ENCODE measurements at regions of chr4 and their contacts with region 1.

Region 1: GRCh38 chr4:85747882-85748491 is 273.0 kb downstream of the ARHGAP24 start:
- DNase-seq: no peak
- H3K4me3 ChIP-seq: no peak overlapping the region
- H3K27ac ChIP-seq: no peak overlapping the region
- H3K4me1 ChIP-seq: peaks cover 21% of the 10 kb centered on the region
- H3K27me3 ChIP-seq: no peaks in the 10 kb centered on the region
- CTCF ChIP-seq: peak; percentile 90

Region 2: GRCh38 chr4:85084380-85085094 is 663.5 kb before region 1 on chr4:
- intact Hi-C with region 1: loop called (anchors 10 kb)
- DNase-seq: no peak
- H3K4me3 ChIP-seq: no peak overlapping the region
- H3K27ac ChIP-seq: no peak overlapping the region
- H3K4me1 ChIP-seq: no peaks in the 10 kb centered on the region
- H3K27me3 ChIP-seq: no peaks in the 10 kb centered on the region
- CTCF ChIP-seq: peak; percentile 76

Region 3: DNA sequence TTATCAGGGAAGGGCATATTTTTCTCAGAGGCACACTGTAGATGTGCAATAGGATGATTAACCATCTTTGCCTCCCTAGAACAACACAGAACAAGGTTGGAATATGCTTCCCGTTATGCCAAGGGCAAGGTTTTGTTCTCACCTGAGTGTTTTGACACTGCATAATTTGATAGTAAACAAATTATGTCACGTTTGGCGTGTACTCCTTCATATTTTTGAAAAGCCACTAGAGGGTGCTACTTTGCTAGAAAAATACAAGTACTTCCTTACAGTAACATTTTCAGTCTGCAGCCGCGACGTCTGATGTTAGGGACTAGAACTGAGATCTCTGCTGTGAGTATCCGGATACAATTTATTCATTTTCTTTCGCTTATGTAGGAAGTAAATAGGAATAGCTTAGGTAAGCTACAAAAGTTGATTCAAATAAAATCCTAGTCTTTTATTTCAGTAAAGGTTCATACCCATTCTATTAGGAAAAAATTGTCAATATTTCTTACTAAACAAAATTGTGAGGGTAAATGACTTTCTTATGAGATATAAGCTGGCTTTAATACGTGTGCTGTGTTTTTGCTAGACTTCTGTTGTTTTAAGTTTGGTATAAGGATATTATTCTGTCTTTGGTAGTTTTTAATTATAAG is 600.4 kb before region 1 on chr4:
- intact Hi-C with region 1: loop called (anchors 2 kb)
- DNase-seq: peak; percentile 38
- H3K4me3 ChIP-seq: peak overlapping the region; percentile 42
- H3K27ac ChIP-seq: peak overlapping the region; percentile 42
- H3K4me1 ChIP-seq: peaks cover 15% of the 10 kb centered on the region
- H3K27me3 ChIP-seq: no peaks in the 10 kb centered on the region
- CTCF ChIP-seq: peak; percentile 76

Region 4: DNA sequence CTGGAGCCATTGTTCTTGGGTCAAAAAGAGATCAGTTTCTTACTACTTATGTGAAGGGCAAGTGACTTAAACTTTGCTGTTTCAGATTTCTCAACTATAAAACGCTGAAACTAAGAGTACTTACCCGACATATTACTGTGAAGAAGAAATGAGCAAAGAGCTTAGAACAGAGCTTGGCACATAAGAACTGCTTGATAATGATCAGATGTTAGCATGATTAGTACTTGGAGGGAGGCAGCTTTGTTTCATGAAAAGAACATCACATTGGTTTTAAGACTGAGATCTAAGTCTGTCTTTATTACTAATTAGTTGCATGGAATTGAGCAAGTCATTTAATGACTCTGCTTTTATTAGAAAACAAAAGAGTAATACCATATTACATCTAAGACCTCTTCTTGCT is 103.9 kb before region 1 on chr4:
- intact Hi-C with region 1: no loop called
- DNase-seq: no peak
- H3K4me3 ChIP-seq: no peak overlapping the region
- H3K27ac ChIP-seq: no peak overlapping the region
- H3K4me1 ChIP-seq: no peaks in the 10 kb centered on the region
- H3K27me3 ChIP-seq: no peaks in the 10 kb centered on the region
- CTCF ChIP-seq: no peak

Region 5: GRCh38 chr4:85658766-85659439 is 89.1 kb before region 1 on chr4:
- intact Hi-C with region 1: no loop called
- DNase-seq: no peak
- H3K4me3 ChIP-seq: no peak overlapping the region
- H3K27ac ChIP-seq: peak overlapping the region; percentile 14
- H3K4me1 ChIP-seq: no peaks in the 10 kb centered on the region
- H3K27me3 ChIP-seq: no peaks in the 10 kb centered on the region
- CTCF ChIP-seq: no peak